Sigmoid colon (tissue), 7 donors: ENCODE measurements at regions of chr22 and their contacts with region 1.

Region 1: GRCh38 chr22:19854778-19855503 is at the starts of genes GNB1L and RTL10:
- DNase-seq: peak; percentile 98
- H3K4me3 ChIP-seq: peak within 1 kb of the TSS; percentile 69 to 95 (median 77)
- H3K27ac ChIP-seq: peak within 1 kb of the TSS; percentile 95 to 97 (median 96)
- H3K4me1 ChIP-seq: peaks cover 0 to 38% (median 27%) of the 10 kb centered on the region in 4 donors
- H3K27me3 ChIP-seq: no peaks in the 10 kb centered on the region
- CTCF ChIP-seq: no peak
- EP300 ChIP-seq: peak in 1 of 4 donors; percentile 26
- POLR2A ChIP-seq: peak; percentile 86 to 91
- total RNA-seq, gene GNB1L: 3.6 to 15.0 (median 5.3) TPM
- total RNA-seq, gene RTL10: 6.6 to 15.0 (median 8.7) TPM

Region 2: DNA sequence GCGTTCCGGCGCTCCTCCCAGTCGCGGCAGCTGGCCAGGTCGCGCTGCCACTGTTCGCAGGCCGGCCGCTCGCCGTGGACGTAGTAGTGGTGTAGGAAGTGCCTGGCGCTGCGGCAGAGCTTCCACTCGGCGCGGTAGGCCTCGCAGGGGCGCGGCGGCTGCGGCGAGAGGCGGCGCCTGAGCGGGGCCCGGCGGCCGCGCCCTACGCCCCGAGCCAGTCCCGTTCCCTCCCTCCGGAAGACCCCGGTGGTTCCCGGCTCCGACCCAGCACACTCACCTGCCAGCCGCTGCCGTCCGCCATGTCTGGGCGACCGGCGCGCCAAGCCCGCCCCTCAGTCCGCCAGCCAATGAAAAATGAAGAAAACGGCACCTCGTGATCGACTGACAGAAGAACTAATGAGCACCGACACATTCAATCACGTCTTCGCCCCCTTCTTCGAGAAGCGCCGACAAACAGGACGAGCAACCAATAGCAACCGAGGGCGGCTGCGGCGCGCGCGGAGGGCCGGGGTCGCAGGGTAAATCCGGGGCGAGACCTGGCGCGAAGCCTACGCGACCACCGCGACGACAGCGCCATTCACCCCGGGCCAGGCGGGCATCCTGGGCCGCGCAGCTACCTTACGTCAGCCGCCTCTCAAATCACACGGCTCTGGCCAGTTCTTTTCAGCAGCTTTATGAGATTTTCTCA is 407.4 kb before region 1 on chr22 and contains the start of gene C22orf39:
- intact Hi-C with region 1: loop called (anchors 10 kb)
- DNase-seq: peak; percentile 96
- H3K4me3 ChIP-seq: peak within 1 kb of the TSS; percentile 64 to 94 (median 72)
- H3K27ac ChIP-seq: peak within 1 kb of the TSS; percentile 88 to 93 (median 92)
- H3K4me1 ChIP-seq: peaks cover 0 to 27% (median 23%) of the 10 kb centered on the region in 4 donors
- H3K27me3 ChIP-seq: no peaks in the 10 kb centered on the region
- CTCF ChIP-seq: no peak
- EP300 ChIP-seq: peak in 1 of 4 donors; percentile 12
- POLR2A ChIP-seq: peak; percentile 53 to 63
- total RNA-seq, gene C22orf39: 88.1 to 135 (median 102) TPM

Region 3: GRCh38 chr22:19488884-19489843 is 365.8 kb before region 1 on chr22:
- intact Hi-C with region 1: no loop called
- DNase-seq: no peak
- H3K4me3 ChIP-seq: no peak overlapping the region
- H3K27ac ChIP-seq: no peak overlapping the region
- H3K4me1 ChIP-seq: peaks cover 0 to 6% (median 0%) of the 10 kb centered on the region in 4 donors
- H3K27me3 ChIP-seq: no peaks in the 10 kb centered on the region
- CTCF ChIP-seq: no peak
- EP300 ChIP-seq: no peak
- POLR2A ChIP-seq: no peak

Region 4: GRCh38 chr22:19879695-19880506 is 25.0 kb after region 1 on chr22:
- intact Hi-C with region 1: loop called (anchors 2 kb)
- DNase-seq: peak; percentile 56
- H3K4me3 ChIP-seq: peak overlapping the region in 1 of 4 donors; percentile 8
- H3K27ac ChIP-seq: peak overlapping the region in 2 of 4 donors; percentile 54 to 66
- H3K4me1 ChIP-seq: peaks cover 0 to 46% (median 34%) of the 10 kb centered on the region in 4 donors
- H3K27me3 ChIP-seq: no peaks in the 10 kb centered on the region
- CTCF ChIP-seq: no peak
- EP300 ChIP-seq: no peak
- POLR2A ChIP-seq: no peak

Region 5: GRCh38 chr22:19941365-19942082 is 86.6 kb after region 1 on chr22 and contains the starts of genes COMT and TXNRD2:
- intact Hi-C with region 1: loop called (anchors 2 kb)
- DNase-seq: peak; percentile 82
- H3K4me3 ChIP-seq: peak within 1 kb of the TSS; percentile 50 to 86 (median 74)
- H3K27ac ChIP-seq: peak within 1 kb of the TSS; percentile 90 to 97 (median 93)
- H3K4me1 ChIP-seq: peaks cover 0 to 73% (median 55%) of the 10 kb centered on the region in 4 donors
- H3K27me3 ChIP-seq: no peaks in the 10 kb centered on the region
- CTCF ChIP-seq: no peak
- EP300 ChIP-seq: no peak
- POLR2A ChIP-seq: peak; percentile 21 to 64
- total RNA-seq, gene COMT: 106 to 162 (median 112) TPM
- total RNA-seq, gene TXNRD2: 16.3 to 29.6 (median 21.1) TPM

Region 6: GRCh38 chr22:20130739-20131596 is 276.0 kb after region 1 on chr22:
- intact Hi-C with region 1: loop called (anchors 10 kb)
- DNase-seq: peak; percentile 94
- H3K4me3 ChIP-seq: peak overlapping the region; percentile 77 to 100 (median 96)
- H3K27ac ChIP-seq: peak overlapping the region; percentile 91 to 99 (median 99)
- H3K4me1 ChIP-seq: peaks cover 0 to 48% (median 42%) of the 10 kb centered on the region in 4 donors
- H3K27me3 ChIP-seq: no peaks in the 10 kb centered on the region
- CTCF ChIP-seq: no peak
- EP300 ChIP-seq: no peak
- POLR2A ChIP-seq: no peak